ENCODE measurements at regions of chr4 and their contacts with region 1.

Region 1: GRCh38 chr4:118193413-118193812 is 159.1 kb downstream of the NDST3 start:
- DNase-seq: no peak

Region 2: GRCh38 chr4:116332508-116332907 is 1860.9 kb before region 1 on chr4:
- intact Hi-C with region 1: loop called in 1 of 2 experiments (anchors 10 kb)
- DNase-seq: no peak

Region 3: GRCh38 chr4:118173956-118174725 is 19.3 kb before region 1 on chr4:
- intact Hi-C with region 1: no loop called
- DNase-seq: no peak

Measured in posterior vena cava (tissue), 2 donors.